Psoas muscle (tissue), 8 donors: ENCODE measurements at regions of chr1 and their contacts with region 1.

Region 1: GRCh38 chr1:23184212-23184934 is 15.7 kb upstream of the LUZP1 start:
- DNase-seq: no peak
- ATAC-seq: peak in 2 of 4 donors; percentile 31 to 66
- H3K4me3 ChIP-seq: peak overlapping the region; percentile 55
- H3K27ac ChIP-seq: no peak overlapping the region
- H3K4me1 ChIP-seq: no peaks in the 10 kb centered on the region
- H3K27me3 ChIP-seq: peaks cover 0 to 7% (median 0%) of the 10 kb centered on the region in 3 donors
- CTCF ChIP-seq: peak; percentile 87

Region 2: GRCh38 chr1:22976461-22977243 is 207.7 kb before region 1 on chr1:
- intact Hi-C with region 1: loop called (anchors 2 to 5 kb)
- DNase-seq: peak in 1 of 2 donors; percentile 36
- ATAC-seq: peak; percentile 84 to 92 (median 86)
- H3K4me3 ChIP-seq: no peak overlapping the region
- H3K27ac ChIP-seq: no peak overlapping the region
- H3K4me1 ChIP-seq: no peaks in the 10 kb centered on the region
- H3K27me3 ChIP-seq: peaks cover 0 to 30% (median 4%) of the 10 kb centered on the region in 3 donors
- CTCF ChIP-seq: peak; percentile 64

Region 3: GRCh38 chr1:23475134-23475628 is 290.8 kb after region 1 on chr1:
- intact Hi-C with region 1: no loop called
- DNase-seq: no peak
- ATAC-seq: peak in 2 of 4 donors; percentile 19 to 37
- H3K4me3 ChIP-seq: no peak overlapping the region
- H3K27ac ChIP-seq: peak overlapping the region; percentile 56
- H3K4me1 ChIP-seq: peaks cover 53% of the 10 kb centered on the region
- H3K27me3 ChIP-seq: no peaks in the 10 kb centered on the region
- CTCF ChIP-seq: no peak